Endothelial cell of umbilical vein (primary cell): ENCODE measurements at regions of chr5 and their contacts with region 1.

Region 1: GRCh38 chr5:141430332-141431113 is at the start of gene PCDHGA12:
- DNase-seq: peak; percentile 87
- H3K4me3 ChIP-seq: peak within 1 kb of the TSS; percentile 30 to 67 (median 40)
- H3K27ac ChIP-seq: peak within 1 kb of the TSS; percentile 10
- H3K4me1 ChIP-seq: peaks cover 17% of the 10 kb centered on the region
- H3K27me3 ChIP-seq: peaks cover 25 to 48% of the 10 kb centered on the region in 2 experiments
- CTCF ChIP-seq: peak; percentile 45 to 69
- POLR2A ChIP-seq: no peak
- total RNA-seq, gene PCDHGA12: 7.6 and 9.9 TPM in 2 replicates

Region 2: DNA sequence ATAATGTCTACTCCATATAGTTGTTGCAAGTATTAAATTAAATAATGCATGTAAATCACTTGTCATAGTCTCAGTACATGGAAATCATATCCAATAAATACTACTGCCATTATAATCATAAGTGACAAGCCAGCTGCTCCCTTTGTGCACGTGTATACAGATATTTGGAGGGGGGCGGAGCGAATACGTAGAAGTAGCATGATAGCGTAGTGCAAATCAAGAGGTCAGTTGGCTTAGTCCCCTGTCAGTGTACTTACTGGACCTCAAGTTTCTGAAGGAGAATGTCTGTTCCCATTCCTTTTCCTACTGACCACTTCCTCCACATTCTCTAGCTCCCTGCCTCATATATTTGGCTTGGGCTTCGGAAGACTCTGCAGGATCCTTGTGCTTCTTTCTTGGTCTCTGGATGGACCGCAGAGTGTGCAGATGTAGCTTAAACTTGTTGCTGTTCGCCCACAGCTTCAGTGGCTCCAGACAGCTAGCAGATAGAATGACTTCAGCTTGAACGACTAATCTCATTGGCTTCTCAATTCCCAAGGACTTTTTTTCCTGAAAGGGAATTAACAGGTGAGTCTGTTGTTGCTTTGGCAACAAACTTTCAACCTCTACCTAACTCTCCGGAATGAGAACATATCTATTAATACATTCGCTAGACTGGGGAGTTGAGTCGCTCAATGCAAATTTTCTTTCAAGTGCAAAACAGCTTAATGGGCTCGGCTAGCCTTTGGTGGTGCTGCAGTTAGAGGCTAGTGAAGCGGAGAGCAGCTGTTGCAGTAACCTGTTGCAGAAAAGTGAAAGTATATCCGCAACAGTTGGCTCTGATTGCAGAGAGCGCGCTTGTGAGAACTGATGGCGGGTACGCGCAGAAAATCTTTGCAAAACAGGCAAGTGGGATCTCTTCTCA is 379.6 kb before region 1 on chr5 and contains the start of gene PCDHB1:
- CTCF ChIA-PET with region 1: no interaction called
- POLR2A ChIA-PET with region 1: no interaction called
- dilution Hi-C with region 1: no loop called
- intact Hi-C with region 1: no loop called
- DNase-seq: no peak
- H3K4me3 ChIP-seq: no peak within 1 kb of the TSS
- H3K27ac ChIP-seq: no peak within 1 kb of the TSS
- H3K4me1 ChIP-seq: no peaks in the 10 kb centered on the region
- H3K27me3 ChIP-seq: no peaks in the 10 kb centered on the region
- CTCF ChIP-seq: no peak
- POLR2A ChIP-seq: no peak
- total RNA-seq, gene PCDHB1: not detected in 2 replicates

Region 3: GRCh38 chr5:141338538-141339306 is 91.8 kb before region 1 on chr5 and contains the start of gene PCDHGA2:
- CTCF ChIA-PET with region 1: interaction called, 15 read pairs
- POLR2A ChIA-PET with region 1: no interaction called
- dilution Hi-C with region 1: no loop called
- intact Hi-C with region 1: no loop called
- DNase-seq: peak; percentile 59
- H3K4me3 ChIP-seq: peak within 1 kb of the TSS in 2 of 3 experiments; percentile 16 to 53
- H3K27ac ChIP-seq: no peak within 1 kb of the TSS
- H3K4me1 ChIP-seq: no peaks in the 10 kb centered on the region
- H3K27me3 ChIP-seq: peaks cover 15 to 66% of the 10 kb centered on the region in 2 experiments
- CTCF ChIP-seq: peak; percentile 43 to 54
- POLR2A ChIP-seq: no peak
- total RNA-seq, gene PCDHGA2: 0.58 and 1.2 TPM in 2 replicates

Region 4: GRCh38 chr5:141412854-141413539 is 17.5 kb before region 1 on chr5 and contains the start of gene PCDHGA10:
- CTCF ChIA-PET with region 1: interaction called, 55 read pairs
- POLR2A ChIA-PET with region 1: interaction called, 6 read pairs
- dilution Hi-C with region 1: no loop called
- intact Hi-C with region 1: no loop called
- DNase-seq: peak; percentile 72
- H3K4me3 ChIP-seq: peak within 1 kb of the TSS; percentile 14 to 72 (median 34)
- H3K27ac ChIP-seq: no peak within 1 kb of the TSS
- H3K4me1 ChIP-seq: peaks cover 6% of the 10 kb centered on the region
- H3K27me3 ChIP-seq: peaks cover 48 to 84% of the 10 kb centered on the region in 2 experiments
- CTCF ChIP-seq: peak; percentile 58 to 76
- POLR2A ChIP-seq: no peak
- total RNA-seq, gene PCDHGA10: 4.4 and 5.8 TPM in 2 replicates

Region 5: DNA sequence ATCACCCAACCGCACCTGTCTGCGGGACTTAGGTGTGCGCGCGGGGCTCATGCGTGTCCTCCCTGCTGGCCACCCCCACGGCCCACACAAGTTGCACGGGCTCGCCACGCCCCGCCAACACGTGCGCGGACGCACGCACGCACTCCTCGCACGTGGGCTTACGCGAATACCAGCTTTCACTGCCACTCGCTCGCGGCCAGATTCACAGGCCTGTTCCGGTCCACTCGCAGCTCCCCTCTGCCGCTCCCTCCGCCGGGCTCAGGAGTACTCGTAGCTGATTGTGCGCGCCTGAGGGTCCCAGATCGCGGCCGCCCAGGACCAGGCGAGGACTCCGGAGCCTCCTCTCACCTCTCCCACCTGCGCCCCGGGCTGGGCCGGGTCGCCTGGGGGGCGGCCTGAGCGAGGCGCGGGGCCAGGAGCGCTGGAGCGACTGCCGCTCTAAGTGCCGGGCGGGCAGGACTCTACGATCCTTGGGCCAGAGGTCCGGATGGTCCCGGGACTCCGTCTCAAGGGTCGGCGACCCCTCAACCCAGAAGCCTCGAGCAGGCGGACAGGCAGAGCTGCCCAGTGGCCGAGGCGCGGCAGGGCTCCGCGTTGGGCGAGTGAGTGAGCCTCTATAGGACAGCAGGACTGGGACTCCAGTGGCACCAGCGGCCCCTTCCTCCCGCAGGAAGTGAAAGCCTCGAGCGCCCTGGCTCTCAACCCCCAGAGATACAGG is 61.8 kb after region 1 on chr5:
- CTCF ChIA-PET with region 1: interaction called, 18 read pairs
- POLR2A ChIA-PET with region 1: no interaction called
- dilution Hi-C with region 1: no loop called
- intact Hi-C with region 1: no loop called
- DNase-seq: no peak
- H3K4me3 ChIP-seq: no peak overlapping the region
- H3K27ac ChIP-seq: no peak overlapping the region
- H3K4me1 ChIP-seq: no peaks in the 10 kb centered on the region
- H3K27me3 ChIP-seq: peaks cover 10 to 25% of the 10 kb centered on the region in 2 experiments
- CTCF ChIP-seq: no peak
- POLR2A ChIP-seq: no peak

Region 6: GRCh38 chr5:141532726-141533125 is 102.2 kb after region 1 on chr5:
- CTCF ChIA-PET with region 1: interaction called, 308 read pairs
- POLR2A ChIA-PET with region 1: no interaction called
- dilution Hi-C with region 1: no loop called
- intact Hi-C with region 1: no loop called
- DNase-seq: peak; percentile 30
- H3K4me3 ChIP-seq: no peak overlapping the region
- H3K27ac ChIP-seq: no peak overlapping the region
- H3K4me1 ChIP-seq: peaks cover 5% of the 10 kb centered on the region
- H3K27me3 ChIP-seq: no peaks in the 10 kb centered on the region
- CTCF ChIP-seq: no peak
- POLR2A ChIP-seq: no peak